CD8-positive, alpha-beta T cell (primary cell): ENCODE measurements at regions of chr9 and their contacts with region 1.

Region 1: GRCh38 chr9:7560669-7561305 is 238.8 kb downstream of the DMAC1 start:
- DNase-seq: no peak
- ATAC-seq: no peak
- H3K4me3 ChIP-seq: no peak overlapping the region
- H3K4me3 Mint-ChIP-seq: no peak overlapping the region
- H3K27ac ChIP-seq: no peak overlapping the region
- H3K27ac Mint-ChIP-seq: no peak overlapping the region
- H3K4me1 ChIP-seq: no peaks in the 10 kb centered on the region
- H3K4me1 Mint-ChIP-seq: no peaks in the 10 kb centered on the region
- H3K27me3 ChIP-seq: no peaks in the 10 kb centered on the region
- H3K27me3 Mint-ChIP-seq: no peaks in the 10 kb centered on the region
- CTCF ChIP-seq: no peak

Region 2: GRCh38 chr9:7479300-7479699 is 81.5 kb before region 1 on chr9:
- CTCF ChIA-PET with region 1: no interaction called
- POLR2A ChIA-PET with region 1: no interaction called
- intact Hi-C with region 1: no loop called
- DNase-seq: no peak
- ATAC-seq: no peak
- H3K4me3 ChIP-seq: no peak overlapping the region
- H3K4me3 Mint-ChIP-seq: no peak overlapping the region
- H3K27ac ChIP-seq: no peak overlapping the region
- H3K27ac Mint-ChIP-seq: no peak overlapping the region
- H3K4me1 ChIP-seq: no peaks in the 10 kb centered on the region
- H3K4me1 Mint-ChIP-seq: no peaks in the 10 kb centered on the region
- H3K27me3 ChIP-seq: no peaks in the 10 kb centered on the region
- H3K27me3 Mint-ChIP-seq: peaks cover 7% of the 10 kb centered on the region
- CTCF ChIP-seq: no peak

Region 3: DNA sequence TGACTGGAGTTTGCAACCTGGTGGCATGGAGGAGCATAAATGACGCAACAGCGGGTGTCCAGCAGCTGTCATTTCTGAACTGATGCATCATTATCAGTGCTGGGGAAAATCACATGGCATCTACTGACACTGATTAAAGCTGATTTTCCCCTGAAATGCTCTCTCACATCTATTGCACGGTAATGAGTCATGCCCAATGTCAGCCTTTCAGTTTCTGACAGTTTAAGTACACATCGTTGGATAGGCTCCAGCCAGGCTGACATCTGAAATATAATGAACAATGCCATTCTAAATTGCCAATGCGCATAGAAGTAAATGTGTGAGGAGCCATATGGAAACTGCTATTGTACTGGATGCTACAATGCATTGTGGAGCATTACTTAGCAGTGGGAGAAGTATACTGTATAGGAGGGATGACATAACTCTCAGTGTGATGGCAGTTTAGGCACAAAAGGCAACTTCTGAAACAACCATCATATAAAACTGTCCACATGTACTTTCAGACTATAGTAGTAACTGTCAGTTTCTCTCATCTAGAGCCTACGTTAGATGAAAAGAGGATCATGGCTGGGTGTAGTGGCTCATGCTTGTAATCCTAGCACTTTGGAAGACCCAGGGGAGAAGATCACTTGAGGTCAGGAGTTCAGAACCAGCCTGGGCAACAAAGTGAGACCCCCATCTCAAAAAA is 628.1 kb after region 1 on chr9:
- CTCF ChIA-PET with region 1: no interaction called
- POLR2A ChIA-PET with region 1: no interaction called
- intact Hi-C with region 1: loop called in 1 of 2 experiments (anchors 10 kb)
- DNase-seq: no peak
- ATAC-seq: no peak
- H3K4me3 ChIP-seq: no peak overlapping the region
- H3K4me3 Mint-ChIP-seq: no peak overlapping the region
- H3K27ac ChIP-seq: no peak overlapping the region
- H3K27ac Mint-ChIP-seq: no peak overlapping the region
- H3K4me1 ChIP-seq: no peaks in the 10 kb centered on the region
- H3K4me1 Mint-ChIP-seq: no peaks in the 10 kb centered on the region
- H3K27me3 ChIP-seq: no peaks in the 10 kb centered on the region
- H3K27me3 Mint-ChIP-seq: no peaks in the 10 kb centered on the region
- CTCF ChIP-seq: no peak